Activated CD8-positive, alpha-beta T cell treated with anti-CD3 and anti-CD28 coated beads, Interleukin-2, amount 10 ng/mL, durations not matched to agents 7 days and 5 days (primary cell): ENCODE measurements at regions of chr19 and their contacts with region 1.

Region 1: DNA sequence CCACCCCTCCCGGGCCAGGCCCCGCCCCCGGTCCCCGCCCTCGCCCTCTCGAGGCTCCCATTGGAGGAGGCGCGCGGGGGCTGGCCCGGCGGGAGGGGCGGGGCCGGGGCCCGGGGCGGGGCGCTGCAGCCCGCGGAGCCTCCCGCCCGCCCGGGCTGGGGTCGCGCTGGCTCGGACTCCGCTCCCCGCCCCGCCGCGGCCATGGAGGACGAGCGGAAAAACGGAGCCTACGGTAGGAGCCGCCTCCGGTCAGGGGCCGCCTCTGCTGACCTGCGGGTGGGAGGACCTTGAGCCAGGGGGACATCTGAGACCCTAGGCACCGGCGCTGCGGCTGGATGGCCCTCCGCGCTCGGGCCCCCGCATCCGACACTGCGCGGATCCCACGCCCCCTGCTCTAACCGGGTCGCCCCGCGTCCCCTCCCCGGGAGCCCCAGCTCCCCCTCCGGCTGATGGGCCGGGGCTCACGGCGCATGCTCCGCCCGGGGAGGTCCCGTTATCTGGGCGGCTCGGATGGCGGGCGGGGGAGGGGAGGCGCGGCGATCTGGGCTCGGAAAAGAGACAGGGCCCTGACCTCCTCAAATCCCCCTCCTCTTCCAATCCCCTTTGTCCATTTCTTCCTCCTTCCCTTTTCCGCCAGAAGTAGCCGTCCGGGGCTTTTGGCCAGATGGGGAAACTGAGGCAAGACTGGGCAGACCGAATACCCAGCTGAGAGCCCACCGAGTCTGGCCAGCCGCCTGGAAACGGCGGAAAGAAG is 15.4 kb upstream of the AP1M2 start:
- DNase-seq: peak; percentile 91
- ATAC-seq: peak; percentile 83
- H3K4me3 Mint-ChIP-seq: peak overlapping the region; percentile 94
- H3K27ac Mint-ChIP-seq: peak overlapping the region; percentile 100
- H3K4me1 Mint-ChIP-seq: peaks cover 29% of the 10 kb centered on the region
- H3K27me3 Mint-ChIP-seq: peaks cover 6% of the 10 kb centered on the region

Region 2: DNA sequence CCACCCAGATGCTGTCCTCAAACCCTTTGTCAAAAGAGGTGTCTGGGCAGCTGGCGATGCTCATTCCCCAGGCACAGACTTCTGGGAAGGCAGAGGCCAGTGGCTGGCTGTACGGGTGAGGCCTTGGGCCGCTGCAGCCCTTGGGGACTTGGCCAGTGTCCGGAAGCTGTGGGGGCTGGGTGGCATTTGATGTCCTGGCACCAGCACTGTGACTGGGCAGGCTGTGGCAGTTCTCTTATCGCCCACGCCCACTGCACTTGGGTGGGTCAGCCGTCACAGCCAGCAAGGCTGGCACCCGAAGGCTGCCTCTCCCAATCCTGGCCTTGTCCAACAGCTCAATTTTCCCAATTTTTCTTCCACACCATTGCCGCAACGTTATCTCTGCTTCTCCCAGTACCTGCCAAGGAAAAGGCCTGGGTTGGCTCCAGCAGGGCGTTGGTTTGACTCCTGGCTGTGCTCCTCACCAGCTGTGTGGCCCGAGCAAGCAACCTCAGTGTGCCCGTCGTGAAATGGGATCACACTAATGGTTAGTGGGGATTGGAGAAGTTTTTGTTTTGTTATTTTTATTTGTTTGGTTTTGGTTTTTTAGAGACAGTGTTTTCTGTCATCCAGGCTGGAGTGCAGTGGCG is 10.1 kb after region 1 on chr19:
- CTCF ChIA-PET with region 1: no interaction called
- POLR2A ChIA-PET with region 1: interaction called, 35 read pairs
- DNase-seq: no peak
- ATAC-seq: no peak
- H3K4me3 Mint-ChIP-seq: no peak overlapping the region
- H3K27ac Mint-ChIP-seq: peak overlapping the region; percentile 55
- H3K4me1 Mint-ChIP-seq: peaks cover 26% of the 10 kb centered on the region
- H3K27me3 Mint-ChIP-seq: no peaks in the 10 kb centered on the region

Region 3: GRCh38 chr19:10625003-10625776 is 22.7 kb after region 1 on chr19 and contains the start of gene SLC44A2:
- CTCF ChIA-PET with region 1: interaction called, 3 read pairs
- POLR2A ChIA-PET with region 1: interaction called, 35 read pairs
- DNase-seq: no peak
- ATAC-seq: no peak
- H3K4me3 Mint-ChIP-seq: peak within 1 kb of the TSS; percentile 34
- H3K27ac Mint-ChIP-seq: peak within 1 kb of the TSS; percentile 89
- H3K4me1 Mint-ChIP-seq: peaks cover 40% of the 10 kb centered on the region
- H3K27me3 Mint-ChIP-seq: no peaks in the 10 kb centered on the region
- total RNA-seq, gene SLC44A2: 112 to 121 TPM